ENCODE measurements at regions of chr22 and their contacts with region 1.

Region 1: DNA sequence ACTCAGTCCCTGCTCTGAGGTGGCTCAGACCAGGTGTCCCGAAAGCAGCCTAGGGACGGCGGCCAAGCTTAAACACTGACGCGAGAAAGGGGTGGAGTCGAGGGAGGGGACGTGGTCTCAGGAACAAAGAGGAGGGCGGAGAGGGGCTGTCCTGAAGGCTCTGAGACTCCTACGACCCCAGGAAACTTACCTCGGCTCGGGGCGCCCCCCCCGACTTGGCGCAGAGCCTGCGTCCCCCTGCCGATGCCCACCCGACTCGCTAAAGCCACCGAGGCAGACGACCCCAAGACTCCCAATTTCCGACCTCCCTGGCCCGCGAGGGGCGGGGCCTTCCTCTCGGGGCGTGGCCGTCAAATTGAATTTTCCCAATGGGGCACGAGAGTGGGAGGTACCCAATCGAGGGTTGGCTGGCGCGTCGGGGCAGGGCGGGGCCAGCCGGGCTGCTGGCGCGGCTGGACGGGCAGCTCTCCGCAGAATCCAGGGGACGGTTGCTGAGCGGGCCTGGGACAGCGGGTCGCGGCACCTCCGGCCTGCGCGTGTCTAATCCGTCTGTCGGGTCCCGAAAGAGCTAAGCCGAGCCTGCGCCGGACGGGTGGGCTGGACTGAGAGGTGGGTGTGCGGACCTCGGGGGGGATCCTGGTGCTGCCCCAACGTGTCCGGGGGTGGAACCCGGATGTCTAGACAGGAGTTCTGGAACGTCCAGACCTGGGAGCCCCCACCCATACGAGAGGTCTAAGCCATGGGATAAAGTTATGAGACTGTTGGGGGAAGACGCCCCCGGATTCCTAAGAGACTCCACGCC is at the start of gene SMTN:
- DNase-seq: peak; percentile 85
- ATAC-seq: peak; percentile 76
- H3K4me3 ChIP-seq: peak within 1 kb of the TSS; percentile 71
- H3K27ac ChIP-seq: peak within 1 kb of the TSS; percentile 83
- H3K4me1 ChIP-seq: peaks cover 26% of the 10 kb centered on the region
- H3K27me3 ChIP-seq: no peaks in the 10 kb centered on the region
- CTCF ChIP-seq: no peak
- POLR2A ChIP-seq: peak; percentile 97
- RAD21 ChIP-seq: no peak
- total RNA-seq, gene SMTN: 47.2 and 53.6 TPM in 2 replicates

Region 2: DNA sequence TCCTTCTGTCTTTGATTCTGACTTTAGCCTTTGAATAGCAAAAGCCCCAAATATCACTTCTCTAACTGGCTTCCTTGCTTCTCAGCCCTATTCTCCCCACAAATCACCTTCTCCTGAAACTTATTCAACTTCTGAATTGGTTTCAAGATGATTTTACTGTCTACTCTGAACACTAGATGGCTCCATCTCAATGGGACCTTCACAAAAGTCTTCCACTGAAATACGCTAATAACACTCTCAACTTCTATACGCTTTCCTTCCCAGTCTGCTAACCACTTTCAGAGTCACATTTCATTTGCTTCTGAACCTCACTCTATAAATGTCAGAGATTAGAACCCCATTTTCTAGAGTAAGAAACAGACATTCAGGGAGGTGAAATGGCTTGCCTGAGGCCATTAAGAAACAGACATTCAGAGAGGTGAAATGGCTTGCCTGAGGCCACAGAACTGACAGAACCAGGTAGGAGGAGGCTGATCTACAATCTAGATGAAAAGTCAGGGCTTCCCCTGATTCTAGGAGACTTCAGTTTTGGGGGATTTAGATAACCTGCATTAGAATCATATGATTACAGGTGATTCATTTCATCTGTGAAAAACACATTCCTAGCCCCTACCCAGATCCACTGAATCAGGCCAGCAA is 133.1 kb before region 1 on chr22:
- CTCF ChIA-PET with region 1: interaction called, 6 read pairs
- POLR2A ChIA-PET with region 1: no interaction called
- dilution Hi-C with region 1: no loop called
- in situ Hi-C with region 1: loop called (anchors 5 kb)
- intact Hi-C with region 1: loop called (anchors 1 kb)
- DNase-seq: peak; percentile 70
- ATAC-seq: peak; percentile 67
- H3K4me3 ChIP-seq: no peak overlapping the region
- H3K27ac ChIP-seq: no peak overlapping the region
- H3K4me1 ChIP-seq: peaks cover 2% of the 10 kb centered on the region
- H3K27me3 ChIP-seq: no peaks in the 10 kb centered on the region
- CTCF ChIP-seq: peak; percentile 67
- POLR2A ChIP-seq: no peak
- RAD21 ChIP-seq: peak; percentile 73

Region 3: GRCh38 chr22:30968924-30969539 is 112.0 kb before region 1 on chr22 and contains the start of gene TUG1:
- CTCF ChIA-PET with region 1: interaction called, 8 read pairs
- POLR2A ChIA-PET with region 1: interaction called, 4 read pairs
- dilution Hi-C with region 1: no loop called
- in situ Hi-C with region 1: no loop called
- intact Hi-C with region 1: loop called (anchors 1 kb)
- DNase-seq: peak; percentile 98
- ATAC-seq: peak; percentile 95
- H3K4me3 ChIP-seq: peak within 1 kb of the TSS; percentile 68
- H3K27ac ChIP-seq: peak within 1 kb of the TSS; percentile 97
- H3K4me1 ChIP-seq: peaks cover 10% of the 10 kb centered on the region
- H3K27me3 ChIP-seq: no peaks in the 10 kb centered on the region
- CTCF ChIP-seq: no peak
- POLR2A ChIP-seq: peak; percentile 88
- RAD21 ChIP-seq: no peak
- total RNA-seq, gene TUG1: 63.3 and 68.8 TPM in 2 replicates

Region 4: GRCh38 chr22:31036671-31037550 is 44.1 kb before region 1 on chr22:
- CTCF ChIA-PET with region 1: interaction called, 10 read pairs
- POLR2A ChIA-PET with region 1: interaction called, 3 read pairs
- dilution Hi-C with region 1: no loop called
- in situ Hi-C with region 1: no loop called
- intact Hi-C with region 1: loop called (anchors 2 kb)
- DNase-seq: peak; percentile 53
- ATAC-seq: peak; percentile 59
- H3K4me3 ChIP-seq: peak overlapping the region; percentile 13; the same call in 1 of the 2 replicates
- H3K27ac ChIP-seq: peak overlapping the region; percentile 86; the same call in 1 of the 2 replicates
- H3K4me1 ChIP-seq: peaks cover 15% of the 10 kb centered on the region
- H3K27me3 ChIP-seq: no peaks in the 10 kb centered on the region
- CTCF ChIP-seq: peak; percentile 24
- POLR2A ChIP-seq: no peak
- RAD21 ChIP-seq: peak; percentile 25; the same call in 1 of the 2 replicates

Region 5: GRCh38 chr22:31098632-31099110 is 17.6 kb after region 1 on chr22:
- CTCF ChIA-PET with region 1: interaction called, 3 read pairs
- POLR2A ChIA-PET with region 1: interaction called, 4 read pairs
- dilution Hi-C with region 1: no loop called
- in situ Hi-C with region 1: no loop called
- intact Hi-C with region 1: loop called (anchors 1 kb)
- DNase-seq: no peak
- ATAC-seq: no peak
- H3K4me3 ChIP-seq: no peak overlapping the region
- H3K27ac ChIP-seq: peak overlapping the region; percentile 66; the same call in 1 of the 2 replicates
- H3K4me1 ChIP-seq: peaks cover 32% of the 10 kb centered on the region
- H3K27me3 ChIP-seq: no peaks in the 10 kb centered on the region
- CTCF ChIP-seq: no peak
- POLR2A ChIP-seq: no peak
- RAD21 ChIP-seq: no peak

Measured in IMR-90 (cell line).